ENCODE measurements at regions of chr16 and their contacts with region 1.

Region 1: DNA sequence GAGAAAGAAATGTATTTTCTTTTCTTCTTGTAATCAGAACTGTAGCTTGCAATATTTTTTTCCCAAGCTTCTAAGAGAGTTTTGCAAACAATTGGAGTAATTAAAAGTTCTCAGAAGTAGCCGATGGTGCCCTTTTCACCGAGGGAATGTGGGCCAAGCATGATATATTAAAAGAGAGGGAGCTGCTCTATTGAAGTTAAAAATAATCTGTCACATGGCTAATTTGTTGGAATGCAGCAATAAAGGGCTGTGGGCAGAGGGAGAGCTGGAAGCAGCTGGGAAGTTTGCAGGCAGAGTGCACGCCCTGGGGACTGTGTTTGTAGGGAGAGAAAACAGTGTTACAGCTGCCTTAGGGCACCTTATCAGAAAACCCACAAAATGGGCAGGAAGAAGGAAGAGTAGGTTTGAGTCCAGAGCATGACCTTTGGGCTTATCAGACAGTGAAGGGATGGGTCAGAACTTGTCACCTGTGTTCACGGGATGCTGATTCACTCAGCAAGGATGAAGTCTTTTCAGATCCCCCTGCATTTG is 18.5 kb upstream of the TERF2 start:
- DNase-seq: peak in 2 of 5 donors; percentile 30 to 31
- H3K4me3 ChIP-seq: no peak overlapping the region
- H3K27ac ChIP-seq: peak overlapping the region in 1 of 2 donors; percentile 4
- H3K4me1 ChIP-seq: peaks cover 7% of the 10 kb centered on the region
- H3K27me3 ChIP-seq: no peaks in the 10 kb centered on the region
- CTCF ChIP-seq: no peak
- EP300 ChIP-seq: no peak
- POLR2A ChIP-seq: no peak

Region 2: DNA sequence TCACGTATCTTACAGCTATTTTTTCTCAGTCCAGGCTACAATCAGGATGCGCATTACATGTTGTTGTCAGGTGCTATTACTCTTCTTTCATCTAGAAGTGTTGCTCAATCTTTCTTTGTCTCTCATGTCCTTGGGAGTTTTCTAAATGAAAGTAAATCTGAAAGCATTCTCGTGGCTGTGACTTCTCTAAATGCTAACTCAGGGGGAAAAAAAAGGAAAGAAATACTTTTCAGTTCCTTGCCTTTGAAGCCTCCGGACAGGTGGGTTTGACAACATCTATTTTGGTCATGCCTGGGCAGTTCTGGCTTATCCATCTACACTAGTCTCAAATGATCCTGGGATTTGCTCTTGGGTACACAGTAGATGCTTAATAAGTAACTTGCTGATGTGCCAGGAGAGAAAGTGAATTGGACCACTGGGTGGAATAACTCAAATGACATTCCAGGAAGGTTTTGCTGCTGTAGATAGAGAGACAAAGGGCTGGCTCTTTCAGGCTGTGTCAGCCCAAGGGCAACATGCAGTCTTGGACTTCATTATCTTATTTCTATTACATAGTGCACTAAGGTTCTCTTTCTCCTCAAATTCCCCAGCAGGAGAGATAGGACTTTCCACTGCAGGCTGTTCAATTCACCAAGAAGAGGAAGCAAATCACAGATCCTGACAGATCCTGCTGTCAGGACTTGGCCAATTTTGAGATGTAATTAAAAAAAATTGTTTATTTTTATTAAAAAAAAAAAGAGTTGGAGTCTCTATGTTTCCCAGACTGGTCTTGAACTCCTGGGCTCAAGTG is 97.8 kb after region 1 on chr16:
- intact Hi-C with region 1: no loop called
- DNase-seq: no peak
- H3K4me3 ChIP-seq: no peak overlapping the region
- H3K27ac ChIP-seq: no peak overlapping the region
- H3K4me1 ChIP-seq: no peaks in the 10 kb centered on the region
- H3K27me3 ChIP-seq: no peaks in the 10 kb centered on the region
- CTCF ChIP-seq: no peak
- EP300 ChIP-seq: no peak
- POLR2A ChIP-seq: no peak

Region 3: DNA sequence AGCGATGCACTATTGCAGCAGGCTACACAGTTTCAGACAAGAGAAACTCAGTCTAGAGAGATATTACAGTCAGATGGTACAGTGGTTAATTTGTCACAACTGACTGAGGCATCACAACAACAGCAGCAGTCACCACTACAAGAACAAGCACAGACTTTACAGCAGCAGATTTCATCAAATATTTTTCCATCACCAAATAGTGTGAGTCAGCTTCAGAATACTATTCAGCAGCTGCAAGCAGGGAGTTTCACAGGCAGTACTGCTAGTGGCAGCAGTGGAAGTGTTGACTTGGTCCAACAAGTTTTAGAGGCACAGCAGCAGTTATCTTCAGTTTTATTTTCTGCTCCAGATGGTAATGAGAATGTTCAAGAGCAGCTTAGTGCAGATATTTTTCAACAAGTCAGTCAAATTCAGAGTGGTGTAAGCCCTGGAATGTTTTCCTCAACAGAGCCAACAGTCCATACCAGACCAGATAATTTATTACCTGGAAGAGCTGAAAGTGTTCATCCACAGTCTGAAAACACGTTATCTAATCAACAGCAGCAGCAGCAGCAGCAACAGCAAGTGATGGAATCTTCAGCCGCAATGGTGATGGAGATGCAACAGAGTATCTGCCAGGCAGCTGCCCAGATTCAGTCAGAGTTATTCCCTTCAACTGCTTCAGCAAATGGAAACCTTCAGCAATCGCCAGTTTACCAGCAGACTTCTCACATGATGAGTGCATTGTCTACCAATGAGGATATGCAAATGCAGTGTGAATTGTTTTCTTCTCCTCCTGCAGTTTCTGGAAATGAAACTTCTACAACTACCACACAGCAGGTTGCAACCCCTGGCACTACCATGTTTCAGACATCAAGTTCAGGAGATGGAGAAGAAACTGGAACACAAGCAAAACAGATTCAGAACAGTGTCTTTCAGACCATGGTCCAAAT is 287.9 kb after region 1 on chr16:
- intact Hi-C with region 1: loop called in 1 of 4 experiments (anchors 10 kb)
- DNase-seq: no peak
- H3K4me3 ChIP-seq: no peak overlapping the region
- H3K27ac ChIP-seq: no peak overlapping the region
- H3K4me1 ChIP-seq: peaks cover 5% of the 10 kb centered on the region
- H3K27me3 ChIP-seq: no peaks in the 10 kb centered on the region
- CTCF ChIP-seq: no peak
- EP300 ChIP-seq: no peak
- POLR2A ChIP-seq: no peak

Region 4: DNA sequence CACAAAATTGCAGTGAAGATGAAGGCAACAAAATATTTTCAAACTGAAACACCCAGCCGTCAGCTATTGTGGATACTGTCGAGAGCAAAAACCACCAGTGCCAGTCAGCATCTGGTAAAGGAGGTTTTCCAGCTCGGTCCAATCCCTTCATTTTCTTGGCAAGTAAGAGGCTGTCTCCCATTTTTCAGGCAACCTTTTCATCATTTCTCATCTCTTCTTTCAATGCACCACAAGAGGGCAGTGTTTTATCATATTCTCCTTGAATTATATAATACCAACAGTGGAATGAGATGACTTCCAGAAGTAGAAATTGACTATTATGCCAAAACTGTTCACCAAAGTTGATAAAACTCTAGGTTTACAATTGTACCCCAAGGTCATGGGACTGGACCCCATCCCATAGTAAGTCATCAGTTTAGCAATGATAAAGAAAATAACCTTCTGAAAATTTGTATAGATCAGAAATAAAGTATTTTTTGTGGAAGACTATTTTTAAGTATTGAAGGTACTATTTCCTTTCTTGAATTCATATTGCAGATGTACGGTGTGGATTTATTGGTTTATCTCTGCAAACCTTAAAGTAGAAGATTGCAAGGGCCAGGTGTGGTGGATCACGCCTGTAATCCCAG is 305.2 kb after region 1 on chr16:
- intact Hi-C with region 1: loop called in 1 of 4 experiments (anchors 5 kb)
- DNase-seq: no peak
- H3K4me3 ChIP-seq: no peak overlapping the region
- H3K27ac ChIP-seq: peak overlapping the region in 1 of 2 donors; percentile 15
- H3K4me1 ChIP-seq: no peaks in the 10 kb centered on the region
- H3K27me3 ChIP-seq: no peaks in the 10 kb centered on the region
- CTCF ChIP-seq: peak; percentile 34 to 80 (median 78)
- EP300 ChIP-seq: no peak
- POLR2A ChIP-seq: no peak

Measured in ovary (tissue), 10 donors.